Common myeloid progenitor, CD34-positive (primary cell): ENCODE measurements at regions of chr22 and their contacts with region 1.

Region 1: GRCh38 chr22:23591201-23591791 is 11.2 kb upstream of the IGLL1 start:
- DNase-seq: peak; percentile 77 to 86 (median 78)
- H3K4me3 ChIP-seq: no peak overlapping the region
- H3K27ac ChIP-seq: peak overlapping the region in 1 of 2 experiments; percentile 45
- H3K4me1 ChIP-seq: peaks cover 5 to 37% (median 32%) of the 10 kb centered on the region in 4 experiments
- H3K27me3 ChIP-seq: no peaks in the 10 kb centered on the region

Region 2: GRCh38 chr22:23539135-23539838 is 52.0 kb before region 1 on chr22:
- CTCF ChIA-PET with region 1: interaction called, 27 read pairs
- POLR2A ChIA-PET with region 1: no interaction called
- DNase-seq: peak; percentile 84 to 88 (median 87)
- H3K4me3 ChIP-seq: peak overlapping the region in 2 of 7 experiments; percentile 40 to 60
- H3K27ac ChIP-seq: no peak overlapping the region
- H3K4me1 ChIP-seq: peaks cover 5 to 56% (median 41%) of the 10 kb centered on the region in 4 experiments
- H3K27me3 ChIP-seq: no peaks in the 10 kb centered on the region

Region 3: DNA sequence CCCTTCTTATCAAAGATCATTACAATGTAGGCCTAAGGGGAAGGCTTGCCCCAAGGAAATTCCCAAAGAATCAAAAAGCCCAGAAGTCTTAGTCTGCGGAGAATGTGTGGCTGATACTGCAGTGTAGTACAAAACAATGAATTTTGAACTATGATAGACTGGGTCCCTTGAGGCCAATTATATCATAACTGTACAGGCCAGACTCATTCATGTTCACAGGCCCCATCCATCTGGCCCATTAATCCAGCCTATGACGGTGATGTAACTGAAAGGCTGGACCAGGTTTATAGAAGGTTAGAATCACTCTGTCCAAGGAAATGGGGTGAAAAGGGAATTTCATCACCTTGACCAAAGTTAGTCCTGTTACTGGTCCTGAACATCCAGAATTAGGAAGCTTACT is 46.4 kb before region 1 on chr22:
- CTCF ChIA-PET with region 1: interaction called, 27 read pairs
- POLR2A ChIA-PET with region 1: no interaction called
- DNase-seq: no peak
- H3K4me3 ChIP-seq: no peak overlapping the region
- H3K27ac ChIP-seq: no peak overlapping the region
- H3K4me1 ChIP-seq: peaks cover 5 to 26% (median 15%) of the 10 kb centered on the region in 4 experiments
- H3K27me3 ChIP-seq: no peaks in the 10 kb centered on the region

Region 4: GRCh38 chr22:23563111-23563510 is 28.2 kb before region 1 on chr22:
- CTCF ChIA-PET with region 1: interaction called, 12 read pairs
- POLR2A ChIA-PET with region 1: no interaction called
- DNase-seq: no peak
- H3K4me3 ChIP-seq: no peak overlapping the region
- H3K27ac ChIP-seq: no peak overlapping the region
- H3K4me1 ChIP-seq: peaks cover 0 to 38% (median 25%) of the 10 kb centered on the region in 4 experiments
- H3K27me3 ChIP-seq: no peaks in the 10 kb centered on the region

Region 5: GRCh38 chr22:23580576-23581259 is 10.6 kb before region 1 on chr22:
- CTCF ChIA-PET with region 1: interaction called, 26 read pairs
- POLR2A ChIA-PET with region 1: no interaction called
- DNase-seq: peak; percentile 77 to 97 (median 94)
- H3K4me3 ChIP-seq: peak overlapping the region in 6 of 7 experiments; percentile 30 to 67 (median 62)
- H3K27ac ChIP-seq: peak overlapping the region; percentile 79 to 81
- H3K4me1 ChIP-seq: peaks cover 21 to 90% (median 86%) of the 10 kb centered on the region in 4 experiments
- H3K27me3 ChIP-seq: no peaks in the 10 kb centered on the region

Region 6: DNA sequence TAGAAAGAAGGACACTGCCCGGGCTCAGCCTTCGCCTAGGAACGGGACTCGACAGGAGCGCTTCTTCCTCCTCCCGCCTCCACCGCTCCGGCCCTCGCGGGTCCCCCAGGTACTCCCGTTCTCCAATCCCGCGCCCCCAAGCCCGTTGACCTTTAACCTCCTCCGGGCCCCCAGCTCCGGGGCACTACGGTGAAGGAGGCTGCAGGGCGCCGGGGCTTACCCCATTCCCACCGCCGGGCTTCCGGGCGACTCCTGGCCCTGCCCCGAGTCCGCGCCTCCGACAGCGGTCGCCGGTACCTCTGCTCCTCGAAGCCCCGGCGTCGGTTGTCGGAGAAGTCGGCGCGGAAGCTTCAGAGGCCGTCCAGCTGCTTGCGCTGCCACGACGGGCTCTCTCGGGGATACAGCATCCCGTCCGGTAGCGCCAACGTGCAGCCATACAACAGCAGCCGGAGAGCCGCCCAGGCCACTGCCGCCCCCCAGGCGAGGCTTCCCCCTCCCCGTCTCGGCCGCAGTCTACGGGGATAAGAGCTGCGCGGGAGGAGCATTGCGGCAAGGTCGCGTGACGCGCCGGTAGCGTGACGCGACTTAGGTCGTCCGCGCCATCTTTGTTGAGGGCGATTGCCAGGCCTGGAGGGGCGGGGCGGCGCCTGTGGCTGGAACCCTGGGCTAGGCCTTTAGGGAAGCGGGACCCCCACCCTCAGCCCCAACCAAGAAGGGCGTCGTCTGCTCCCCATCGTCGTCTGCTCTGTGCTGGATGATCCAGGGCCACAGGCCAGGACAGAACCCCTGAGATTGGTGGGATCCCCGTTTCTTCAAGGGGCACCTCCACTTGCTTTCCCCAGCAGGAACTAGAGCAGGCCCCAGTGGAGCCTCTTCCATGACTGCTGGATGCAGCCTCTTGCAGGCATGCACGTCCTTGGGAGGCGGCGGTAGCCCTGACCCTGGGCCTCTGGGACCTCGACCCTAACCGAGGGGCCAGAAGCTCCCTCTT is 125.8 kb after region 1 on chr22:
- CTCF ChIA-PET with region 1: no interaction called
- POLR2A ChIA-PET with region 1: no interaction called
- DNase-seq: peak; percentile 86 to 92 (median 91)
- H3K4me3 ChIP-seq: peak overlapping the region; percentile 75 to 90 (median 86)
- H3K27ac ChIP-seq: peak overlapping the region; percentile 33 to 76
- H3K4me1 ChIP-seq: peaks cover 3 to 20% (median 13%) of the 10 kb centered on the region in 4 experiments
- H3K27me3 ChIP-seq: no peaks in the 10 kb centered on the region